Esophagus squamous epithelium (tissue), 5 donors: ENCODE measurements at regions of chr4 and their contacts with region 1.

Region 1: DNA sequence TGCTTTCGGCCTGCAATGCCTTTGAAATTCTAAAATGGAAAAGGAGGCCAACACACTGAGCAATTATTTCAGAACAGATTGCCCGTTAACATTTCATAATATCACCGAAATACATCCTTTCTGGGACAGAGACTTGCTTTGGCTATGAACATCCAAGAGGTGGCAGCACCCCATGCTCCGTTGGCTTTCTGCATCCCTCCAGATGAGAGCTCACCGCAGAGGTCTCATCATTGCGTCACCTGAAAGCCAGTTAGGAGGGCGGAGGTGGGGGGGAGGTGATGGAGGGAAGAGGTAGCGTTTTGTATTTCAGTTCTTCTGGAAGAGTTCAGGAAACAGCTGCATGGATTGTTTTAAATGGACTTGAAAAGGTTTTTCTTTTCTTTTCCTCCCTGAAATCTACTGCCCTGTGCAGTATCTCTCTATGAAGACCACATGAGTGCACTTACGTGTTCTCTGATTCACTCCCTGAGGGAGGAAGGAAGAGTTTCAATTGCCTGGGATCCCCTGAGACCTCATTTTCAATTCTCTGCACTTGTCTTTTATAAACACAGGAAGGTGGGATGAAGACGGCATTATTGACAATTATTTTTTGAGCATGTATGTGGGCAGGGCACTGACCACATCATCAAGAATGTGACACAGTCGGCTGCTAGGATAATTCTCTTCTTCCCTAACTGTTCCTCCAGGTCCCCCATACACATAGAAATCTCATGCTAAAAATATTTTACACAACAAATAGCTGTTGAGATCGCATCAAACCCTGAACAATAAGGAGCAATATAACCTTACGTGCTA is 166.9 kb upstream of the PGRMC2 start:
- DNase-seq: peak; percentile 5
- H3K4me3 ChIP-seq: no peak overlapping the region
- H3K27ac ChIP-seq: no peak overlapping the region
- H3K4me1 ChIP-seq: peaks cover 0 to 25% (median 0%) of the 10 kb centered on the region in 3 donors
- H3K27me3 ChIP-seq: no peaks in the 10 kb centered on the region
- CTCF ChIP-seq: peak; percentile 54 to 82 (median 72)
- POLR2A ChIP-seq: no peak

Region 2: DNA sequence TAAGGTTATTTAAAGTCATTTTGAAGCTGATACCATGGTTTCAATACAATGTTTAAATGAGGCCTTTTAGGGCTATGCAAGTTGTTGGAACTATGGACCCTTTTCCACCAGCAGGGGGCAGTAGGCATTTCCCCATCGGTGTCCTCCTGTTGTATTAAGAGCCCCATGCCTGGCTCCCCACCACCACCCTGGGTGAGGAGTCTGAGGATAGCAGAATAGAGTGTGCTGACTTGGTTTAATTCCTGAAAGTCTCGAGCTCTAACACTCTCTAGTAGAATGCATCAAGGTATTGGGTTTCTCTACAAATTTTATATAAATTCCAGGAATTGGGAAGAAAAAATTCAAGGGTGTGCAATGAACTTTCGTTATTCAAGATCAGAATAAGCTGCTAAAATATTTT is 120.2 kb after region 1 on chr4:
- intact Hi-C with region 1: loop called (anchors 10 kb)
- DNase-seq: no peak
- H3K4me3 ChIP-seq: no peak overlapping the region
- H3K27ac ChIP-seq: no peak overlapping the region
- H3K4me1 ChIP-seq: peaks cover 4 to 35% (median 28%) of the 10 kb centered on the region in 3 donors
- H3K27me3 ChIP-seq: no peaks in the 10 kb centered on the region
- CTCF ChIP-seq: peak; percentile 10 to 70 (median 52)
- POLR2A ChIP-seq: no peak

Region 3: DNA sequence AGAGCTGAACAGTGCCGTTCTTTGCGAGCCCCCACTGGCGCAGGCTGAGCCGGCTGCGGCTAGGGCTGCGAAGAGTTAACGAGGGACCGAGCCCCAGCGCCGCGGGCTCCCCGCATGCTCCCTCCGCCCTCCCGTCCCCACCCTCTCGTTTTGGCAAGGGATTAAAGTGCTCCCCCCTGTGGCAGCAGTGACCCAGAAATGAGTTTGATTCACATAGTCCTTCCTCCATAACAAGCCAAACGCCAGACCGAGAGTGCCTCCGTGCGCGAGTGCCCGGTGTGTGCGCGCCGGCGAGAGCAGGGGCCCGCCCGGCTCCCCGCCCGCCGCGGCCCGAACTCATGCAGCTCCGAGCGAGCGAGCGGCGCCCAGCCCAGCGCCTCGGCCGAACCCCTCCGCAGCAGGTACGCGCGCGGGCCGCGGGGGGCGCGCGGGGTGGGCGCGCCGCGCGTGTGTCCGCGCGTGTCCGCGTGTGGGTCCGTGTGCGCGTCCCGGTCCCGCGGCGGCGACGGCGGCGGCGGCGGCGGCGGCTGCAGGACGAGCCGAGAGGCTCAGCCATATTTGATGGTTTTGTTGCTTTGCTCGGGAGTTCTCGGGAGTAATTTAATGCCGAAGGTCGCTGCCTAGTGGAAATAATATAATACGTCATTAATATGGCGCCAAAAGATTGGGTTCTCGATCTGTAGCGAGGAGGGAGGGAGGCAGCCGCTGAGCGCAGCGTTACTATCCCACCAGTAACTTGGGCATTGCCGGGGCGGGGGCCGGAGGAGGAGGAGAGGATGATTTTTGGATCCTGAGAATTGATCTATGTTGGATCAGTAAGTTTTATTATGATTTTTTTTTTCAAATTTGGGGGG is 355.2 kb after region 1 on chr4 and contains the start of gene JADE1:
- intact Hi-C with region 1: no loop called
- DNase-seq: peak; percentile 53
- H3K4me3 ChIP-seq: peak within 1 kb of the TSS; percentile 71 to 74 (median 72)
- H3K27ac ChIP-seq: peak within 1 kb of the TSS; percentile 82 to 99 (median 90)
- H3K4me1 ChIP-seq: peaks cover 3 to 23% (median 6%) of the 10 kb centered on the region in 3 donors
- H3K27me3 ChIP-seq: no peaks in the 10 kb centered on the region
- CTCF ChIP-seq: peak; percentile 48 to 76 (median 65)
- POLR2A ChIP-seq: peak in 2 of 4 donors; percentile 64 to 70
- total RNA-seq, gene JADE1: 3.6 to 27.1 (median 8.3) TPM